Activated T-helper 1 cell treated with anti-CD3 and anti-CD28 coated beads, Interleukin-12 subunit alpha, Interleukin-12 subunit beta, Interleukin-2, Interleukin-4 antibody, amounts not matched to agents 30 ng/mL and 10 ng/mL and 1 ng/mL, durations not matched to agents 14 hours and 24 hours and 36 hours (primary cell): ENCODE measurements at regions of chr5 and their contacts with region 1.

Region 1: DNA sequence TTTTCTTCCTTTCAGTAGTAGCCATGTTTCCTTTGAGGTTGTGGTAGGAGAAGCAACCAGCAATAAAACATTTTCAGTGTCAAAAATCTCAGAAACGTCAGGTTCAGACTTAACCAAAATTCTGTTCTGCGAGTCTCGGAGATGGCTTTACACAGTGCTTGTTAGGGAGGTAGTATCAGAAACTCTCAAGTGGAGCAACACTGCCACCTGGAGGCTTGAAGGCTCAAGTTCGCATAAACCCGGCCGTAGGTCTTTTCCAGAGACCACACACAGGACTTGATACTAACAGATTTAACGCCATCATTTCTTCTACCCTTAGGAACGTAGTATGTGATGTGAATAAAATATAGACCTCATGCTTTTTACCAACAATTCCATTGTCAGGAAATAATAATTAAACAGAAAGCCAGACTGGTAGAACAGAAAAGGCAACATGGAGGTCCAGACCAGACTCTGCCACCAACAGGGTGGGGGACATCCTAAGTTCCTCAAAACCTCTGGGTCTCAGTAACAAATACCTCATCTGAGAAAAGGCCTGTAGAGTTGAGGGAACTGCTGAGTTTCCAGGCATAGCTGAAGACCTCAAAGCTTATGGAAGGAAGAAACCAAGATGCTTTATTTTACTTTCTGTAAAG is 8.5 kb downstream of the PTGER4 start:
- DNase-seq: peak; percentile 81
- H3K4me3 Mint-ChIP-seq: peak overlapping the region; percentile 99
- H3K27ac Mint-ChIP-seq: peak overlapping the region; percentile 91
- H3K4me1 Mint-ChIP-seq: peaks cover 71% of the 10 kb centered on the region
- H3K27me3 Mint-ChIP-seq: no peaks in the 10 kb centered on the region

Region 2: DNA sequence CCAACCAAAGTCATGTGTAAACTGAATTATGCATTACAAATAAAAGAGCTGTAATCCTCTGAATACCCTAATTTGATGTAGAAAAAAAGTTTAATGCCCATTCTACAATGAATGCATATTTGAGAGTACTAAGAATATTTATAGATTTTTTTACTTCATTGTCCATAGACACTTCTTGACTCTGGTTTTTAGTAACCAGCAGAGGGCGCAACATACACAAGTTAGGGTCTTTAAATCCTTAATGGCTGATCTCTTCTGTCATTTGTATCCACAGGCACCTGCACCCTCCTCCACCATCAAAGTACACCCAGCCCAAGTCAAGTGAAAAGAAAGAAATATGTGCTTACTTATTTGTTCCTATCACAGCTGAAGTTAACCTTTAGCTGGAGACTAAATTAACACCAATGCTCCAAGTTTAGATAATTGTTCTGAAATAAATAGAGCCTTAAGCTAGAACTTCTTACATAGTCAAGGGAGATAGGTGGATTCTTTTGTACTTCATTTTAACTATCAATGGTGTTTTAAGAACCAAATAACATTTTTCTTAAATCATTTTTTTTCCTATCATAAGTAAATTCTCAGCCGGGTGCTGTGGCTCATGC is 739.3 kb before region 1 on chr5:
- intact Hi-C with region 1: loop called (anchors 1 kb)
- DNase-seq: peak; percentile 46
- H3K4me3 Mint-ChIP-seq: no peak overlapping the region
- H3K27ac Mint-ChIP-seq: peak overlapping the region; percentile 7
- H3K4me1 Mint-ChIP-seq: peaks cover 6% of the 10 kb centered on the region
- H3K27me3 Mint-ChIP-seq: peaks cover 5% of the 10 kb centered on the region

Region 3: DNA sequence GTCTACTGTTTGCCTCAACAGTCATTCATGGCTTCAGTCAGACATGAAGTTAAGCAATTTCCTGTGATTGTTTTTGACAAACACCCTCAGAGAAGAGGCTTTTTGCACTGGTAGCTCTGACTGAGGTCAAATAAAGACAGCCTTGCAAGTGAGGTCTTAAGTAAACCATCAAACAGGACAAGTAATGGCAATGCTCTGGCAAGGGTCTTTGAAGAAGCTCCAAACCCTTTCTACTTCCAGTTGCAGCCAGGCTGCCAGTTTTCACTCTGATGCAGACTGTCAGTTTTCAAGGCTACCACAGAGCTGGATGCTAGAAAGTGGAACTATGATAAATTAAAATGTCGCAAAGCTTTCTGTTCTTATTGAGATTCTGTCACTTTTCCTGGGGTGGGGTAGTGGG is 430.0 kb before region 1 on chr5:
- intact Hi-C with region 1: loop called (anchors 1 kb)
- DNase-seq: no peak
- H3K4me3 Mint-ChIP-seq: peak overlapping the region; percentile 38
- H3K27ac Mint-ChIP-seq: peak overlapping the region; percentile 83
- H3K4me1 Mint-ChIP-seq: peaks cover 21% of the 10 kb centered on the region
- H3K27me3 Mint-ChIP-seq: peaks cover 3% of the 10 kb centered on the region

Region 4: GRCh38 chr5:40410231-40410861 is 277.9 kb before region 1 on chr5:
- intact Hi-C with region 1: loop called (anchors 1 kb)
- DNase-seq: peak; percentile 76
- H3K4me3 Mint-ChIP-seq: peak overlapping the region; percentile 72
- H3K27ac Mint-ChIP-seq: peak overlapping the region; percentile 95
- H3K4me1 Mint-ChIP-seq: peaks cover 70% of the 10 kb centered on the region
- H3K27me3 Mint-ChIP-seq: no peaks in the 10 kb centered on the region

Region 5: GRCh38 chr5:40507095-40507494 is 181.1 kb before region 1 on chr5:
- intact Hi-C with region 1: loop called (anchors 1 kb)
- DNase-seq: no peak
- H3K4me3 Mint-ChIP-seq: no peak overlapping the region
- H3K27ac Mint-ChIP-seq: no peak overlapping the region
- H3K4me1 Mint-ChIP-seq: peaks cover 13% of the 10 kb centered on the region
- H3K27me3 Mint-ChIP-seq: no peaks in the 10 kb centered on the region

Region 6: GRCh38 chr5:40755407-40756365 is 67.4 kb after region 1 on chr5 and contains the start of gene TTC33:
- intact Hi-C with region 1: loop called (anchors 1 kb)
- DNase-seq: peak; percentile 92
- H3K4me3 Mint-ChIP-seq: no peak within 1 kb of the TSS
- H3K27ac Mint-ChIP-seq: peak within 1 kb of the TSS; percentile 41
- H3K4me1 Mint-ChIP-seq: peaks cover 21% of the 10 kb centered on the region
- H3K27me3 Mint-ChIP-seq: no peaks in the 10 kb centered on the region
- total RNA-seq, gene TTC33: 23.4 and 24.6 TPM in 2 replicates

Region 7: GRCh38 chr5:40958811-40959210 is 270.6 kb after region 1 on chr5:
- intact Hi-C with region 1: no loop called
- DNase-seq: no peak
- H3K4me3 Mint-ChIP-seq: no peak overlapping the region
- H3K27ac Mint-ChIP-seq: no peak overlapping the region
- H3K4me1 Mint-ChIP-seq: no peaks in the 10 kb centered on the region
- H3K27me3 Mint-ChIP-seq: no peaks in the 10 kb centered on the region